Posterior vena cava (tissue), 2 donors: ENCODE measurements at regions of chr6 and their contacts with region 1.

Region 1: DNA sequence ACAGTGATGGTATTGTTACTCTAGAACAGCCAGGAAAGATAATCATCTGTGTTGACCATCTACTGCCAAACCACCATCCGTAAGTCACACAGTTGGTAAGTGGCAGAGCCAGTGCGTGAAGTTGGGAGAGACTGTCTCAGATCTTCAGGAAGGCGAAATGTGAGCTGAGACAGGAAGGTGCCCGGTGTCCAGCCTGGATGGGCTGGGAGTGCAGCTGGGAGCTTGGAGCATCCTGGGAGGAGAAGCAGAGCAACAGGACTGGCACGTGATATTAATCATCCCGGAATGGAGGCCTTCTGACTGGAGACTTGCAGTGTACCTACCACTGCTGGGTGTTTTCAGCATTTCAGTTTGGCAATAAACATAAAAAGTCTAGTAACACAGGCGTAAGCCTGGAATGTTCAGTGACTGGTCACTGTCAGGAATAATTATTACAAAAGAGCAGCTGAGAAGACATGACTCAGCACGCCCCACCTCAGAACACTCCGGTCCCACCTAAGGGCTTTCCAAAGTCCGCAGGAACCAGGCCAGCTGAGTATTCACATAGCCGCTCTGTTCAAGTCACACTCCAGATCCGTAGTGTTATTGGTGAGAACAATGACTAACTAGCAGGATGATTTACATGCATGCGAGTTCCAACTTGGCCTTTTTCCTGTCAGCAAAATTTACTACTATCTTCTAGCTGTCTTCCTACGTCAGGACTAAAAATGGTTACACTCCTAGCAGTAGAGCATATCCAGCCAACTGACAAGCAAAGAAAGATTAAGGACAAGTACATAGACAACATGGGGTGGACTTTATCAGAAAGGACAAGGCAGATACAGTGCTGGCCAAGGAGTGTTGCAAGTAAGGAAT is 45.1 kb upstream of the PNRC1 start:
- DNase-seq: peak; percentile 97

Region 2: GRCh38 chr6:89058627-89059026 is 23.1 kb after region 1 on chr6:
- intact Hi-C with region 1: no loop called
- DNase-seq: no peak

Region 3: GRCh38 chr6:89080542-89081422 is 45.3 kb after region 1 on chr6 and contains the start of gene PNRC1:
- intact Hi-C with region 1: loop called (anchors 2 to 5 kb)
- DNase-seq: peak; percentile 100
- total RNA-seq, gene PNRC1: 280 to 381 TPM

Region 4: GRCh38 chr6:89145787-89146646 is 110.5 kb after region 1 on chr6 and contains the start of gene PM20D2:
- intact Hi-C with region 1: loop called in 1 of 2 experiments (anchors 10 kb)
- DNase-seq: peak; percentile 87
- total RNA-seq, gene PM20D2: 9.1 to 14.0 TPM